ENCODE measurements at regions of chr2 and their contacts with region 1.

Region 1: GRCh38 chr2:101883863-101884262 is 107.9 kb upstream of the IL1R2 start:
- DNase-seq: no peak
- ATAC-seq: peak; percentile 95
- H3K4me3 ChIP-seq: no peak overlapping the region
- H3K27ac ChIP-seq: no peak overlapping the region
- H3K4me1 ChIP-seq: no peaks in the 10 kb centered on the region
- H3K27me3 ChIP-seq: no peaks in the 10 kb centered on the region
- CTCF ChIP-seq: peak; percentile 50 to 70 (median 63); a peak in 5 of 6 replicates
- EP300 ChIP-seq: no peak
- POLR2A ChIP-seq: no peak
- RAD21 ChIP-seq: peak; percentile 64

Region 2: DNA sequence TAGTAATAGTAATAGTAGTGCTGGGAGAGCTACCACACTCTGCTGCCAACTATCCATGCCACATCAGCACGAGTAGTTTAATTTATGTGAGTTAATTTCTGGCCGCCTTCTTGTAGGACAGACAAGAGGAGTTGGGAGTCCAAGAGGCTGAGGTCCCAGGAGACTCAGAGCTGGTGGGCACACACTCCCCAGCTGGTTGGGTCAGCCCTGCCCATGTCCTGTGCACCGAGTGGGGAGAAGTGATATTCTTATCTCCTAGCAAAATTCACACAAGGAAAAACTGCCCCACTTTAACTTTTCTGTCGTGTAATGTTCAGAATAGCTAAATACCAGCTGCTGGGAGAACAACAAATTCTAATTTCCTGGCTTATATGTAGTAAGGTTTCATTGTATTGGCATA is 201.6 kb before region 1 on chr2:
- CTCF ChIA-PET with region 1: no interaction called
- POLR2A ChIA-PET with region 1: no interaction called
- RAD21 ChIA-PET with region 1: no interaction called
- SMC1A ChIA-PET with region 1: no interaction called
- in situ Hi-C with region 1: no loop called
- intact Hi-C with region 1: no loop called
- DNase-seq: no peak
- ATAC-seq: no peak
- H3K4me3 ChIP-seq: no peak overlapping the region
- H3K27ac ChIP-seq: no peak overlapping the region
- H3K4me1 ChIP-seq: no peaks in the 10 kb centered on the region
- H3K27me3 ChIP-seq: no peaks in the 10 kb centered on the region; a peak in 1 of 4 replicates
- CTCF ChIP-seq: no peak
- EP300 ChIP-seq: no peak
- POLR2A ChIP-seq: no peak
- RAD21 ChIP-seq: no peak

Region 3: GRCh38 chr2:101717071-101717845 is 166.6 kb before region 1 on chr2:
- CTCF ChIA-PET with region 1: no interaction called
- POLR2A ChIA-PET with region 1: no interaction called
- RAD21 ChIA-PET with region 1: no interaction called
- SMC1A ChIA-PET with region 1: no interaction called
- in situ Hi-C with region 1: no loop called
- intact Hi-C with region 1: no loop called
- DNase-seq: peak; percentile 44
- ATAC-seq: peak; percentile 84
- H3K4me3 ChIP-seq: 0 out of 2 replicates have a peak overlapping the region, but pooled peaks have one; percentile 10
- H3K27ac ChIP-seq: no peak overlapping the region; the same call in 1 of the 2 replicates
- H3K4me1 ChIP-seq: peaks cover 21% of the 10 kb centered on the region
- H3K27me3 ChIP-seq: no peaks in the 10 kb centered on the region; a peak in 1 of 4 replicates
- CTCF ChIP-seq: no peak
- EP300 ChIP-seq: no peak
- POLR2A ChIP-seq: no peak
- RAD21 ChIP-seq: no peak

Region 4: DNA sequence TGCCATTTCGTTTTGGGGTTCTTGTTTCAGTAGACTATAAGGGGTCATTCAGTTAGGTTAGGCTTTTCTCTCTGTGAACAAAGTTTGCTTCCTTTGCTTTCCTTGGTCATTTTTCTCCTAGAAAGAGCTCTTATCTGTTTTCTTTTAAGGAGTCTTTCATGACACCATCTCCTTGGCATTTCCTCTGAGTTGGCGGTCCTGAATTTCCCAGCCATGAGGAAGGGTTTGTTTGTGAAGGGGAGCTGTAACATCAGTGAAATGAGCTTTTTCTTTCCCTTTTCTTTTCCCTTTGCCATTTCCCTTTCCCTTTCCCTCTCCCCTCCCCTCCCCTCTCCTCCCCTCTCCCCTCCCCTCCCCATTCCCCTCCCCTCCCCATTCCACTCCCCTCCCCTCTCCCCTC is 124.7 kb before region 1 on chr2:
- CTCF ChIA-PET with region 1: no interaction called
- POLR2A ChIA-PET with region 1: no interaction called
- RAD21 ChIA-PET with region 1: no interaction called
- SMC1A ChIA-PET with region 1: no interaction called
- in situ Hi-C with region 1: no loop called
- intact Hi-C with region 1: no loop called
- DNase-seq: no peak
- ATAC-seq: no peak
- H3K4me3 ChIP-seq: no peak overlapping the region
- H3K27ac ChIP-seq: no peak overlapping the region
- H3K4me1 ChIP-seq: peaks cover 26% of the 10 kb centered on the region
- H3K27me3 ChIP-seq: no peaks in the 10 kb centered on the region; a peak in 1 of 4 replicates
- CTCF ChIP-seq: no peak
- EP300 ChIP-seq: no peak
- POLR2A ChIP-seq: no peak
- RAD21 ChIP-seq: no peak

Region 5: DNA sequence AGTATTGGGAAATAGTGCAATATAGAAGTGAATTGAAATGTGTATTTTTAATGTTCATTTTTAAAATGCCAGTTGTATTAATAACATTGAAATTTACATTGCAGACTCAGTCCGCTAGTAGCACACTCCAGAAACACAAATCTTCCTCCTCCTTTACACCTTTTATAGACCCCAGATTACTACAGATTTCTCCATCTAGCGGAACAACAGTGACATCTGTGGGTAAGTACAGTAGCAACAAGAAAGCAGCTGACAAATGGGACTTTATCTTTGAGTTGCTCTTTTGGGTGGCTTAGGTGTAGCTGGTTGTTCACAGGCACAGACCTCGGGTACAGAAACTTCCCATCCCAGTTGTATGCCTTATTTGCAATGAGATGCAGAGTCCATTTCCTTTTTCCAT is 10.3 kb before region 1 on chr2:
- CTCF ChIA-PET with region 1: interaction called, 18 read pairs
- POLR2A ChIA-PET with region 1: no interaction called
- RAD21 ChIA-PET with region 1: interaction called, 5 read pairs
- SMC1A ChIA-PET with region 1: interaction called, 7 read pairs
- in situ Hi-C with region 1: no loop called
- intact Hi-C with region 1: no loop called
- DNase-seq: no peak
- ATAC-seq: peak; percentile 55; the same call in 2 of the 3 replicates
- H3K4me3 ChIP-seq: no peak overlapping the region
- H3K27ac ChIP-seq: no peak overlapping the region
- H3K4me1 ChIP-seq: no peaks in the 10 kb centered on the region
- H3K27me3 ChIP-seq: no peaks in the 10 kb centered on the region
- CTCF ChIP-seq: peak; percentile 11 to 48 (median 29); a peak in 3 of 6 replicates
- EP300 ChIP-seq: no peak
- POLR2A ChIP-seq: no peak
- RAD21 ChIP-seq: peak; percentile 66

Region 6: GRCh38 chr2:101983928-101984327 is 100.1 kb after region 1 on chr2:
- CTCF ChIA-PET with region 1: interaction called, 29 read pairs
- POLR2A ChIA-PET with region 1: no interaction called
- RAD21 ChIA-PET with region 1: interaction called, 16 read pairs
- SMC1A ChIA-PET with region 1: interaction called, 23 read pairs
- in situ Hi-C with region 1: no loop called
- intact Hi-C with region 1: no loop called
- DNase-seq: no peak
- ATAC-seq: peak; percentile 28; the same call in 1 of the 3 replicates
- H3K4me3 ChIP-seq: no peak overlapping the region
- H3K27ac ChIP-seq: no peak overlapping the region
- H3K4me1 ChIP-seq: no peaks in the 10 kb centered on the region
- H3K27me3 ChIP-seq: no peaks in the 10 kb centered on the region
- CTCF ChIP-seq: peak in 2 of 3 experiments; percentile 13 to 32; a peak in 4 of 6 replicates
- EP300 ChIP-seq: no peak
- POLR2A ChIP-seq: no peak
- RAD21 ChIP-seq: peak; percentile 25; the same call in 1 of the 2 replicates

Region 7: DNA sequence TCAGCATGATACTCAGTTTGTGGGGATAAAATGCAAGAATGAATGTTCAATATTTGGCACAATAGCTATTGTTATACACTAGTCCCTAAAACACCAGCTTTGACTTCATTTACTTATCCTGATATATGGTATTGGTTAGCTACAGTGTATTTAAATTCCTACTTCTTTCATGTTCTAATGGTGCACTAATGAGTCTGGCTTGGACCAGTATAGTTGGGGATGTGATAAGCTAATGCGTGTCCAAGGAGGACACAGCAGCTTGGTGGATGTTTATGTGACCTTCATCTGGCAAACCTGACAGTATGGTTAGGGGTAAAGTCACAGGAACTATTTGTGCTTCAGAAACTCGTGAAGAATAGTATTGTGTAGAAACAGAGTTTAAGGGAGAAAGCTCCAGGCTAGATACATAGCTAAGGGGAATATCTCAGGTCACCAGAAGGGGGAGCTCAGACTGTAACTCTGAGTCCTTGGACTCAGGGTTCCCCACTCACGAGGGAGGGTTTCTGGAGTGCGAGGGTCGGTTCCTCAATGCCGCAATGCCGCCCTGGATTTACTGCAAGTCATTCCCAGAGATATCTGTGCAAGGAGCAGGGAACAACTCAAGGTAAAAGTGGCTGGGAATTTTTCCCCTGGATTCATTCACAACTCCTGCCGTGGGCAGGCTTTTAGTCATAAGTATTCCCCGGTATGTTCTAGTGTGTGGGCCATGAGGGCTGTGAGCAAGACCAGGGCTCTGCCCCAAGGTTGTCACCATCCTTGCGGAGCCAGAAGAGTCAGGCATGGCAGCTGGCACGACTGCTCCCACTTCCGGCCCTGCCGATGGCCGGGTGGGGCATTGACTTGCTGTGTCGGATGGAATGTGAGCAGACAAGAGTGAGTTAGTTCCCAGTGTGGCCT is 122.4 kb after region 1 on chr2:
- CTCF ChIA-PET with region 1: interaction called, 166 read pairs
- POLR2A ChIA-PET with region 1: interaction called, 4 read pairs
- RAD21 ChIA-PET with region 1: interaction called, 61 read pairs
- SMC1A ChIA-PET with region 1: interaction called, 105 read pairs
- in situ Hi-C with region 1: no loop called
- intact Hi-C with region 1: loop called (anchors 2 kb)
- DNase-seq: no peak
- ATAC-seq: peak; percentile 82
- H3K4me3 ChIP-seq: no peak overlapping the region
- H3K27ac ChIP-seq: no peak overlapping the region
- H3K4me1 ChIP-seq: peaks cover 3% of the 10 kb centered on the region; the same call in 1 of the 2 replicates
- H3K27me3 ChIP-seq: no peaks in the 10 kb centered on the region; a peak in 1 of 4 replicates
- CTCF ChIP-seq: peak; percentile 63 to 73 (median 69)
- EP300 ChIP-seq: no peak
- POLR2A ChIP-seq: no peak
- RAD21 ChIP-seq: peak; percentile 51

Region 8: GRCh38 chr2:102166189-102166845 is 282.5 kb after region 1 on chr2:
- CTCF ChIA-PET with region 1: interaction called, 7 read pairs
- POLR2A ChIA-PET with region 1: no interaction called
- RAD21 ChIA-PET with region 1: interaction called, 18 read pairs
- SMC1A ChIA-PET with region 1: interaction called, 19 read pairs
- in situ Hi-C with region 1: no loop called
- intact Hi-C with region 1: no loop called
- DNase-seq: no peak
- ATAC-seq: no peak
- H3K4me3 ChIP-seq: no peak overlapping the region
- H3K27ac ChIP-seq: no peak overlapping the region
- H3K4me1 ChIP-seq: no peaks in the 10 kb centered on the region
- H3K27me3 ChIP-seq: no peaks in the 10 kb centered on the region
- CTCF ChIP-seq: peak in 1 of 3 experiments; percentile 37; a peak in 2 of 6 replicates
- EP300 ChIP-seq: no peak
- POLR2A ChIP-seq: no peak
- RAD21 ChIP-seq: 0 out of 2 replicates have a peak, but pooled peaks have one; percentile 11

Region 9: GRCh38 chr2:102301867-102302362 is 418.1 kb after region 1 on chr2:
- CTCF ChIA-PET with region 1: interaction called, 12 read pairs
- POLR2A ChIA-PET with region 1: no interaction called
- RAD21 ChIA-PET with region 1: no interaction called
- SMC1A ChIA-PET with region 1: interaction called, 3 read pairs
- in situ Hi-C with region 1: no loop called
- intact Hi-C with region 1: no loop called
- DNase-seq: peak; percentile 47
- ATAC-seq: peak; percentile 100
- H3K4me3 ChIP-seq: no peak overlapping the region
- H3K27ac ChIP-seq: no peak overlapping the region
- H3K4me1 ChIP-seq: no peaks in the 10 kb centered on the region
- H3K27me3 ChIP-seq: no peaks in the 10 kb centered on the region
- CTCF ChIP-seq: peak; percentile 55 to 67 (median 57)
- EP300 ChIP-seq: peak in 1 of 2 experiments; percentile 52; a peak in 1 of 4 replicates
- POLR2A ChIP-seq: no peak
- RAD21 ChIP-seq: peak; percentile 55

Region 10: GRCh38 chr2:102449370-102449974 is 565.6 kb after region 1 on chr2:
- CTCF ChIA-PET with region 1: interaction called, 26 read pairs
- POLR2A ChIA-PET with region 1: no interaction called
- RAD21 ChIA-PET with region 1: interaction called, 15 read pairs
- SMC1A ChIA-PET with region 1: interaction called, 5 read pairs
- in situ Hi-C with region 1: loop called (anchors 10 kb)
- intact Hi-C with region 1: loop called (anchors 2 kb)
- DNase-seq: no peak
- ATAC-seq: peak; percentile 78
- H3K4me3 ChIP-seq: no peak overlapping the region
- H3K27ac ChIP-seq: no peak overlapping the region
- H3K4me1 ChIP-seq: no peaks in the 10 kb centered on the region
- H3K27me3 ChIP-seq: no peaks in the 10 kb centered on the region
- CTCF ChIP-seq: peak; percentile 49 to 79 (median 58); a peak in 5 of 6 replicates
- EP300 ChIP-seq: no peak
- POLR2A ChIP-seq: no peak
- RAD21 ChIP-seq: peak; percentile 87